HepG2 (cell line): ENCODE measurements at regions of chr1 and their contacts with region 1.

Region 1: DNA sequence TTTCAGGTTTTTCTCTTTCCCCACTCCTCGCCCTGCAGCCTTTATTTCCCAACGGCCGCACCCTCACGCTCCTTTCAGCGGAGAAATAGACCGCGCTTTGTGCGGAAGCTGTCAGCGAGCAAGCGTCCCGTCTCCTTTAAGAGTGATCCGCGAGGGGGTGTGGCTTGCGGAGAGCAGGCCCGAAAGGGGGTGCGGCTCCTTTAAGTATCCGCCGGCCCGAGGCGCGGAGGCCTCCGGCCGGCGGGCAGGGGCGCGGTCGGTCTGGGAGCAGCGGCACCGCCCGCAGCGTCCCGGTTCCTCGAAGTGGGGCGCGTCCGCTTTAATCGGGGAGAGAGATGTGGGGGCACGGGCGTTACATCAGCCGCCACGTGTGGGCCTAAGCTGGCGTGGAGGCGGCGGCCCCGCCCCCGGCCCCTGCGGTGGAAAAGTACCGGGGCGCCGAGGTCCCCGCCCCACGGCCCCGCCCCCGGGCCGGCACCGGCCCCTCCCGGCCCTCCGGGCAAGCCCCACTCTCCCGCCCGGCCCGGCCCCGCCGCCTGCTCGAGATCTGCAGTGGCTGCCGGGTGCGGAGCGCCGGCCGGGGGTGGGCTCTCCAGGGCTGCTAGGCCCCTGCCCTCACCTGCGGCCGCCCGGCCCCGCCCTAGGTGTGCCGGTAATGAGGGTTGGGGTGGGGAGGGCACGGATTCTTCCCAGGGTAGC is 1.2 kb downstream of the SLC6A9 start:
- DNase-seq: peak; percentile 65
- ATAC-seq: peak; percentile 69
- H3K4me3 ChIP-seq: peak overlapping the region; percentile 91 to 96 (median 95)
- H3K27ac ChIP-seq: peak overlapping the region; percentile 78
- H3K4me1 ChIP-seq: peaks cover 39% of the 10 kb centered on the region
- H3K27me3 ChIP-seq: no peaks in the 10 kb centered on the region
- CTCF ChIP-seq: no peak
- EP300 ChIP-seq: peak in 1 of 2 experiments; percentile 56; a peak in 2 of 4 replicates
- POLR2A ChIP-seq: peak; percentile 52 to 65
- RAD21 ChIP-seq: no peak

Region 2: GRCh38 chr1:43466403-43466802 is 563.7 kb before region 1 on chr1:
- CTCF ChIA-PET with region 1: no interaction called
- POLR2A ChIA-PET with region 1: no interaction called
- in situ Hi-C with region 1: no loop called
- intact Hi-C with region 1: no loop called
- DNase-seq: no peak
- ATAC-seq: no peak
- H3K4me3 ChIP-seq: no peak overlapping the region
- H3K27ac ChIP-seq: no peak overlapping the region
- H3K4me1 ChIP-seq: peaks cover 40% of the 10 kb centered on the region
- H3K27me3 ChIP-seq: no peaks in the 10 kb centered on the region
- CTCF ChIP-seq: no peak
- EP300 ChIP-seq: no peak
- POLR2A ChIP-seq: no peak
- RAD21 ChIP-seq: no peak

Region 3: DNA sequence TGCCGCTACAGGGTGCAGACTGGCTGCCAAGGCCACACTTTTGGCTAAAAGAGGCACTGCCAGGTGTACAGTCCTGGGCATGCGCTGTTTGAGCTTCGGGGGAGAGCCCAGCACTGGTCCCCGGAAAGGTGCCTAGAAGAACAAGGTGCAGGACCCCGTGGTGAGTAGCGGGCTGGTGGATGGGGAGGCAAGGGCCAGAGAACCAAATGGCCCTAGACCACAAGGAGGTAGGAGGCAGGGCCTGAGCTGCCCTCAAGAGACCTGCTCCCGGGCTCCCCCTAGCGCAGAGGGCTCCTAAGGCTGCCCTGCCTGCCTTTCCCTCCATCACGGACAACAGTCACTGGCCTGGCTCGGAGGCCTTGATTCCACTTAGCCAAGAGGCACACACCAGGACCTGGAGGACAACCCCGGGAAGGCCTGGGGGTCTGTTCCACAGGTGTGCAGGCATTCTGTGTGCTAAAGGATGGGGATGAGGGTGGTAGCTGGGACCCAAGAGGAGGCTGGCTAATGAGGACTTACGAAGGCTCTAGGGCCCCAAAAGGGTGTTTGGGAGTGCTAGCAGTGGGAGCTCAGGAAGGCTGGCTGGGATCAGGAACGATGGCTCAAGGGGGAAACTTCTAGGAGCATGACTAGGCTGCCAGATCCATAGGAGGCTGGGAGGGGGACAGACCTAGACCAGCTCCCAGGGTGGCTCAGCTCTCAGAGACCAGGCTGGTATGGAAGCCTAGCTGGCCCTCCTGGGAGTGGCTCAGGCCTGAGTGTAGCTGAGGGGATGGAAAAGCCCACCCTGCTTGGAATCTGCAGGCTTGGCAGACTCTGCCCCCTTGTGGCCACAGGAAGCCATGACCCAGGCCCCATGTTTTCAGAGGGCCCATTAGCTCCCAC is 95.7 kb before region 1 on chr1:
- CTCF ChIA-PET with region 1: no interaction called
- POLR2A ChIA-PET with region 1: interaction called, 9 read pairs
- in situ Hi-C with region 1: no loop called
- intact Hi-C with region 1: loop called (anchors 10 kb)
- DNase-seq: peak; percentile 65
- ATAC-seq: peak; percentile 68
- H3K4me3 ChIP-seq: peak overlapping the region in 2 of 3 experiments; percentile 39 to 84; a peak in 2 of 6 replicates
- H3K27ac ChIP-seq: no peak overlapping the region
- H3K4me1 ChIP-seq: peaks cover 39% of the 10 kb centered on the region
- H3K27me3 ChIP-seq: no peaks in the 10 kb centered on the region
- CTCF ChIP-seq: peak; percentile 91
- EP300 ChIP-seq: no peak
- POLR2A ChIP-seq: no peak
- RAD21 ChIP-seq: peak; percentile 75

Region 4: DNA sequence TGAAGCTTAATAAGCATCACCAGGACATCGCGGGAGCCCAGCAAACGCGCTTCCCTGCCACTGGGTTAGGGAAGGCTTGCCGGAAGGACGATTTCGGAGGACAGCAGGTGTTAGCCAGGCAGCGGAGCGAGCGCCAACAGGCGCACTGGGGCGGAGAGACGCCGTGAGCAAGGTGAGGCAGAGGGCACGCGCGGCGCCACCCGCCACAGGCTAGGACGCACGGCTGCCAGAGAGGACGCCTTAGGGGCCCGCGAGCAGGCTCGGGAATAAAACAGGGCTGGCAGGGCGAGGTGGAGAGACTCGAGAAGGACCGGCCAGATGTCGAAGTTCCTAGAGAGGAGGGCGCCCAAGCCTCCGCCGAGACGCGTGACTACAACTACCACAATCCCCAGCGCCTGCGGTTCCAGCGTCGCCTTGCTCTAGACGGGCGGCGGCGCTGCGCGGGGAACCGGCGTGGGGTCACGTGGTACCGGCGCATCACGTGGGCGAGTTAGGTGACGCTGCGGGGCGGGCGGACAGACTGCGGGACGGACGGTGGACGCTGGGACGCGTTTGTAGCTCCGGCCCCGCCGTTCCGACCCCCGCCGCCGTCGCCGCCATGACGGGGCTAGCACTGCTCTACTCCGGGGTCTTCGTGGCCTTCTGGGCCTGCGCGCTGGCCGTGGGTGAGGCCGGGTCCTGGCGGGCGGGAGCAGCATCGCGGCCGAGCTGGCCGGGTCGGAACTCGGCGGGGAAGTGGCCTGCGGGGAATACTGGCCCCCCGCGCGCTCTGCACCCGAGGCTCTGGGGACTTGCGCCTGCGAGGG is 55.4 kb before region 1 on chr1 and contains the start of gene ATP6V0B:
- CTCF ChIA-PET with region 1: no interaction called
- POLR2A ChIA-PET with region 1: interaction called, 11 read pairs
- in situ Hi-C with region 1: no loop called
- intact Hi-C with region 1: no loop called
- DNase-seq: peak; percentile 84
- ATAC-seq: peak; percentile 71
- H3K4me3 ChIP-seq: peak within 1 kb of the TSS; percentile 95 to 96 (median 95)
- H3K27ac ChIP-seq: peak within 1 kb of the TSS; percentile 75
- H3K4me1 ChIP-seq: peaks cover 50% of the 10 kb centered on the region
- H3K27me3 ChIP-seq: no peaks in the 10 kb centered on the region
- CTCF ChIP-seq: peak; percentile 66
- EP300 ChIP-seq: 0 out of 4 replicates have a peak, but pooled peaks of 1 of the 2 experiments have one; percentile 7
- POLR2A ChIP-seq: peak in 1 of 2 experiments; percentile 71; a peak in 2 of 4 replicates
- RAD21 ChIP-seq: no peak; the same call in 1 of the 2 replicates
- total RNA-seq, gene ATP6V0B: 76.4 and 161 TPM in 2 replicates

Region 5: DNA sequence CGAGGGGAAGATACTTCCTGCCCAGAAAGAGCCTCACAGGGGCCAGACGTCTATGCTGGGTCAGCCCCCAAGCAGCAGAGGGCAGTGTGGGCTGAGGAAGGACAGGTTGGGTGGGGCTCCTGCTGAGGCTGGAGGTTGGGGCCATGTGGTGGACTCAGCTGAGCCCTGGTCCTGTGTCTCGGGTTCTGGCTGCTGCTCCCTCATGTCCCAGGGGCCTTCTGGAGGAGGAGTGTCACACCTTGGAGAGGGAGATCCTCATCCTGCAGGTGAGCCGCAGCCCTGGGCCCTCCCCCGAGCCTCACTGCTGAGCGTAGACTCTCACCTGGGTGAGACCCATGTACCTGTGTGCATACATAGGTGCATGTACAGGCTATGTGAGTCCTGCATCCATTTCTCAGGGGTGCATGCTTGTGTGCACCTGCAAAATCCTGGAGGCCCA is 35.1 kb before region 1 on chr1:
- CTCF ChIA-PET with region 1: no interaction called
- POLR2A ChIA-PET with region 1: interaction called, 4 read pairs
- in situ Hi-C with region 1: loop called (anchors 5 kb)
- intact Hi-C with region 1: no loop called
- DNase-seq: peak; percentile 40
- ATAC-seq: peak; percentile 63
- H3K4me3 ChIP-seq: no peak overlapping the region
- H3K27ac ChIP-seq: no peak overlapping the region
- H3K4me1 ChIP-seq: peaks cover 54% of the 10 kb centered on the region
- H3K27me3 ChIP-seq: no peaks in the 10 kb centered on the region
- CTCF ChIP-seq: peak; percentile 86
- EP300 ChIP-seq: no peak
- POLR2A ChIP-seq: no peak
- RAD21 ChIP-seq: peak; percentile 57; the same call in 1 of the 2 replicates

Region 6: DNA sequence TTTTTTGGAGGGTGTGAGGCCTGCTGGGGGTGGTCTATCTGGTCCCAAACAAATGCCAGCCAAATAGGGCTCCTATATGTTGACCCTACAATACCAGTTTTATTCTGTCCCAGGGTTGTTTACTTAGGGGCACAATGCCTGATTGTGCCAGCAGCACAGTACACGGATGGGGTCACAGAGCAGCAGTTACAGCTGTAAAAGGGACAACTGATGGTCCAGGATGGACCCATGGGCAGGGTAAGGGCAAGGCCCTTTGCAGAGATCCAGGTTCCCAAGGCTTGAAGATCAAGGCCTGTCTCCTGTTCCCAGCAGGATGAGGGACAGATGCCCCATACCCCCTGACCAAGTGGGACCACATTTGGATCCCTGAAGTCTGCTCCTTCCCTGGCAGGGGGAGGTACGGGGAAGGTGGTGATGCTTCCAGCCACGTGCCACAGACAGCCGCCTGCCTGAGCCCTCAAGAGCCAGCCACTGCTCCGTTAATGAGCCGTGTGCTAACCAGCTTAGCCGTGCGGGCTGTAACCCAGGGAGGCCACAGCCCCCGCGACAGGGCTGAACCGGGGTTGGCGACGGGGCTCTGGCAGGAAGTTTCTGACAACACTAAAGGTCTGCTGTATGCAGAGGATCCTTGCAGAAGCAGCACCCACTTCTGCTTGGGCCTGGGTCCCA is 17.0 kb before region 1 on chr1:
- CTCF ChIA-PET with region 1: no interaction called
- POLR2A ChIA-PET with region 1: interaction called, 32 read pairs
- in situ Hi-C with region 1: no loop called
- intact Hi-C with region 1: no loop called
- DNase-seq: no peak
- ATAC-seq: no peak
- H3K4me3 ChIP-seq: no peak overlapping the region
- H3K27ac ChIP-seq: no peak overlapping the region
- H3K4me1 ChIP-seq: peaks cover 66% of the 10 kb centered on the region
- H3K27me3 ChIP-seq: no peaks in the 10 kb centered on the region
- CTCF ChIP-seq: no peak
- EP300 ChIP-seq: no peak
- POLR2A ChIP-seq: no peak
- RAD21 ChIP-seq: no peak

Region 7: DNA sequence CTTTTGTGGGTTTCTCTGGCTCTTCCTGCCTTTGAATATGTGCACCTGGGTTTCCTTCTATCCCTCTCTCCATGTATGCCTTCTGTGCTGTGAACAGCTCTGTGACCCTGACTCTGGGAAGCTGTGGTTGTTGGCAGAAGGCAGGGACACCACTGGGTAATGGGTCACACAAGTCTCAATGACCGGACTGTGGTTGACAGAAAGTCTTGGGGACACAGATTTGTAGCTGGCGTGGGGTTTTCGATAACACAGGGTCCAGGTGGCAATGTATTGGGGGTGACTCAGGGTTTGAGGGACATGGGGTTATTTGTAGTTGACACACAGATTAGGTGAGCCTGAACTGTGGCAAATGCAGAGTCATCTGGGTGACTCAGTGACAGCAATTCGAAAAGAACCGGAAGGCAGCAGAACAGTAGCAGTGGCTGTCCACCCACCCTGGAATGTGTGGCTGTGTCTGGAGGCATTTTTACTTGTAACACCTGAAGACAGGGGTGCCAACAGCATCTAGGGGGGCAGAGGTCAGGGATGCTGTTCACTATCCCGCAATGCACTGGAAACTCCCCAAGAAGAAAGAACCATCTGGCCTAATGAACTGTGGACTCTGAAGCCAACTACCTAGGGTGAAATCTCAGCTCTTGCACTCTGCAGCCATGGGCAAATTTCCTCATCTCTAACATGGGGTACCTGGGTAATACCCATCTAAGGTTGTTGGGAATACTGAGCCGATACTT is 14.2 kb after region 1 on chr1:
- CTCF ChIA-PET with region 1: no interaction called
- POLR2A ChIA-PET with region 1: interaction called, 22 read pairs
- in situ Hi-C with region 1: no loop called
- intact Hi-C with region 1: no loop called
- DNase-seq: peak; percentile 20
- ATAC-seq: peak; percentile 60
- H3K4me3 ChIP-seq: peak overlapping the region in 1 of 3 experiments; percentile 57; a peak in 1 of 6 replicates
- H3K27ac ChIP-seq: no peak overlapping the region
- H3K4me1 ChIP-seq: peaks cover 37% of the 10 kb centered on the region
- H3K27me3 ChIP-seq: no peaks in the 10 kb centered on the region; a peak in 1 of 5 replicates
- CTCF ChIP-seq: no peak
- EP300 ChIP-seq: no peak
- POLR2A ChIP-seq: no peak
- RAD21 ChIP-seq: no peak